OCI-LY7 (cell line): ENCODE measurements at regions of chr9 and their contacts with region 1.

Region 1: DNA sequence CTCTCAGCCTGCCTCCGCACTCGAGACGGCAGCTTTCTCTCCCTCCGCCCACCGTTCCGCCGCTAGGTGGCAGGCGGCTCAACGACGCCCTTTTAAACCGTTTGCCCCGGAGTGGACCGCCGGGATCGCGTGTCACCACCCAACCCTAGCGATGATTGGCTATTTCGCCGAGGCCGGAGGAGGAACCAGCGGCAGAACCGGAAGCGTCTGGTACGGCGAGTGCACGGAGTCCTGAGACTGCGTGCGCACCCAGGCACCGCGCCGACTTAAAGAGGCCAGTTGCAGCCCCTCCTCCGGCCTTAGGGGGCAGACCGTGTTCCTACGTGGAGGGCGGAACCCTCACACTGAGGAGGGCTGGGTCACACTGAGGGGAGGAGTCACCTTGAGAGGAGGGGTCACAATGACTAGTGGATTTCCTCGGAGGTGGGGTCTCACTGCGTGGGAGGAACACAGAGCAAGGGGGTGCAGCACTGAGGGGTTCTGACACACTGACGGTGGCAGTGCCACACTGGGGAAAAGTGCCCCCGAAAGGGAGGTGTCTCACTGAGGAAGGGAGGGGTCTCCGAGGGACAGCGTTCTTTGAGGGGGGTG is 980 bp upstream of the TESK1 start:
- DNase-seq: peak; percentile 100
- H3K4me3 ChIP-seq: peak overlapping the region; percentile 90
- H3K27ac ChIP-seq: peak overlapping the region; percentile 79
- H3K4me1 ChIP-seq: peaks cover 26% of the 10 kb centered on the region
- CTCF ChIP-seq: peak; percentile 90

Region 2: DNA sequence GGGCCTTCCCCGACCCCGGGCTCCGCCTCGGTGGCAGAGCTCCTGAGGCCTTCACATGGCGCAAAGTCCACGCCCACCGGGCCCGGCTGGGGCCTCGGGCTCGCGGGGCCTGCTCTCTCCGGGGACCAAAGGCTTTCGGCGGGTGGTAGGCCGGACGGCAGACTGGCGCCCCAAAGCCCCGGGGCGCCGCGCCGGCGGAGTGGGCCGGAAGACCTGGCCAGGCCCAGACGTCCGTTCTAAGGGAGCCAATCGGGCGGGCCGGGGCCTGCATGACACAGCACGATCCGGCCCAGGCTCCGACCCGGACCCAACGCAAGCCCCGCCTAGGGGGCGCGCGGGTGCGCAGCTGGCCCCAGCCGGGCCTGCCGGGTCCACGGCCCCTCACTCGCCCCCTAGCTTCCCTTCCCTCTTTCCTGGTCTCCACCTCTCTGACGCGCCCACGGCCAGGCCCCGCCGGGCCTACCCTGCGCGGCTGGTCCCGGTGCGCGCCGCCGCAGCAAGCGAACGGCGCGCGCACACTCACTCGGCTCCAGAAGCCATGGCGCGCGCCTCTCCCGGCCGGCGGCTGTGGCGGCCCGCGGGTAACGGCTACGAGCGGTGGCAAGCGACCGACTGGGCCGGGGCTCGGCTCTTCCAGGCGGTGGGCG is 532.1 kb before region 1 on chr9:
- CTCF ChIA-PET with region 1: no interaction called
- POLR2A ChIA-PET with region 1: no interaction called
- intact Hi-C with region 1: loop called (anchors 10 kb)
- DNase-seq: peak; percentile 87
- H3K4me3 ChIP-seq: peak overlapping the region; percentile 92
- H3K27ac ChIP-seq: peak overlapping the region; percentile 92
- H3K4me1 ChIP-seq: peaks cover 33% of the 10 kb centered on the region
- CTCF ChIP-seq: peak; percentile 64

Region 3: GRCh38 chr9:35508069-35508468 is 96.0 kb before region 1 on chr9:
- CTCF ChIA-PET with region 1: no interaction called
- POLR2A ChIA-PET with region 1: no interaction called
- intact Hi-C with region 1: loop called (anchors 10 kb)
- DNase-seq: no peak
- H3K4me3 ChIP-seq: no peak overlapping the region
- H3K27ac ChIP-seq: no peak overlapping the region
- H3K4me1 ChIP-seq: no peaks in the 10 kb centered on the region
- CTCF ChIP-seq: no peak

Region 4: GRCh38 chr9:35871497-35871896 is 267.4 kb after region 1 on chr9:
- CTCF ChIA-PET with region 1: no interaction called
- POLR2A ChIA-PET with region 1: no interaction called
- intact Hi-C with region 1: no loop called
- DNase-seq: no peak
- H3K4me3 ChIP-seq: no peak overlapping the region
- H3K27ac ChIP-seq: no peak overlapping the region
- H3K4me1 ChIP-seq: no peaks in the 10 kb centered on the region
- CTCF ChIP-seq: no peak